Naive thymus-derived CD8-positive, alpha-beta T cell (primary cell): ENCODE measurements at regions of chr11 and their contacts with region 1.

Region 1: GRCh38 chr11:122697636-122698167 is 42.2 kb downstream of the UBASH3B start:
- DNase-seq: peak; percentile 22 to 75 (median 42)
- ATAC-seq: peak; percentile 76 to 80
- H3K4me3 Mint-ChIP-seq: peak overlapping the region; percentile 54 to 88 (median 79)
- H3K27ac Mint-ChIP-seq: peak overlapping the region; percentile 87 to 98 (median 95)
- H3K4me1 Mint-ChIP-seq: peaks cover 37 to 95% (median 93%) of the 10 kb centered on the region in 4 donors
- H3K27me3 Mint-ChIP-seq: no peaks in the 10 kb centered on the region

Region 2: GRCh38 chr11:122578168-122578825 is 119.4 kb before region 1 on chr11:
- POLR2A ChIA-PET with region 1: no interaction called
- DNase-seq: no peak
- ATAC-seq: no peak
- H3K4me3 Mint-ChIP-seq: no peak overlapping the region
- H3K27ac Mint-ChIP-seq: no peak overlapping the region
- H3K4me1 Mint-ChIP-seq: peaks cover 8 to 14% (median 10%) of the 10 kb centered on the region in 4 donors
- H3K27me3 Mint-ChIP-seq: peaks cover 0 to 2% (median 1%) of the 10 kb centered on the region in 5 donors

Region 3: DNA sequence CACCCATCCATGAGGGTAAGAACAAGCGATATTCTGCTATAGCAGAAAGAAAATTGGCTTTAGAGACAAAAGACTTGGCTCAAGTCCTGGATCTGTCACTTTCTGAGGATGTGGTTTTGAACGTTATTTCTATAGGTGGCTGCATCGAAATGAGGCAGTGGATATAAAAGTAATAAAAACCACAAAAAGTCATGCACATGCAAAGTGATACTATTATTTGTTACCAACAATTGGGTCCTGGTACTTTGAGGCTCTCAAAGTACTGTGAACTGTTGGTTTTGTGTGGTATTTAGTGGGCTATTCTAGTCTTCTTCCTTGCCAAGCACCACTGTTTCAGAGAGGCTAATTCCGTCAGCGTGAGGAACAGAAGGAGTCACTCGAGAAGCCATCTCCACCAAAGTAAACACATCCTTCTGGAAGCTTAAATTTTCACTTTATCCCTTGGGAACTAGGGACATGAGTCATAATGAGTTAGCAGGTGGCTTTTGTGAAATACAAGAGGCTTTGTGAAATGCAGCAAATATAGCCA is 29.1 kb before region 1 on chr11:
- POLR2A ChIA-PET with region 1: interaction called, 56 read pairs
- DNase-seq: peak in 4 of 10 donors; percentile 28 to 59 (median 44)
- ATAC-seq: peak; percentile 52 to 80
- H3K4me3 Mint-ChIP-seq: peak overlapping the region in 9 of 10 donors; percentile 19 to 77 (median 56)
- H3K27ac Mint-ChIP-seq: peak overlapping the region; percentile 79 to 95 (median 91)
- H3K4me1 Mint-ChIP-seq: peaks cover 46 to 95% (median 84%) of the 10 kb centered on the region in 4 donors
- H3K27me3 Mint-ChIP-seq: no peaks in the 10 kb centered on the region

Region 4: GRCh38 chr11:122711831-122712381 is 14.2 kb after region 1 on chr11:
- POLR2A ChIA-PET with region 1: interaction called, 13 read pairs
- DNase-seq: no peak
- ATAC-seq: no peak
- H3K4me3 Mint-ChIP-seq: no peak overlapping the region
- H3K27ac Mint-ChIP-seq: peak overlapping the region in 5 of 10 donors; percentile 3 to 63 (median 27)
- H3K4me1 Mint-ChIP-seq: peaks cover 29 to 83% (median 65%) of the 10 kb centered on the region in 4 donors
- H3K27me3 Mint-ChIP-seq: no peaks in the 10 kb centered on the region

Region 5: GRCh38 chr11:122727101-122727929 is 29.6 kb after region 1 on chr11:
- POLR2A ChIA-PET with region 1: interaction called, 28 read pairs
- DNase-seq: peak in 6 of 10 donors; percentile 9 to 55 (median 32)
- ATAC-seq: peak; percentile 78 to 79
- H3K4me3 Mint-ChIP-seq: peak overlapping the region; percentile 76 to 97 (median 86)
- H3K27ac Mint-ChIP-seq: peak overlapping the region; percentile 93 to 99 (median 98)
- H3K4me1 Mint-ChIP-seq: peaks cover 45 to 86% (median 79%) of the 10 kb centered on the region in 4 donors
- H3K27me3 Mint-ChIP-seq: no peaks in the 10 kb centered on the region

Region 6: GRCh38 chr11:122754553-122755322 is 57.0 kb after region 1 on chr11:
- POLR2A ChIA-PET with region 1: interaction called, 144 read pairs
- DNase-seq: peak in 8 of 10 donors; percentile 12 to 68 (median 44)
- ATAC-seq: peak; percentile 56 to 58
- H3K4me3 Mint-ChIP-seq: peak overlapping the region in 1 of 10 donors; percentile 9
- H3K27ac Mint-ChIP-seq: peak overlapping the region in 7 of 10 donors; percentile 9 to 87 (median 67)
- H3K4me1 Mint-ChIP-seq: peaks cover 28 to 82% (median 68%) of the 10 kb centered on the region in 4 donors
- H3K27me3 Mint-ChIP-seq: no peaks in the 10 kb centered on the region